Head of caudate nucleus (tissue), 42 donors: ENCODE measurements at regions of chr3 and their contacts with region 1.

Region 1: GRCh38 chr3:181176601-181177000 is 187.1 kb upstream of the DNAJC19 start:
- DNase-seq: peak; percentile 51 to 93 (median 80)

Region 2: DNA sequence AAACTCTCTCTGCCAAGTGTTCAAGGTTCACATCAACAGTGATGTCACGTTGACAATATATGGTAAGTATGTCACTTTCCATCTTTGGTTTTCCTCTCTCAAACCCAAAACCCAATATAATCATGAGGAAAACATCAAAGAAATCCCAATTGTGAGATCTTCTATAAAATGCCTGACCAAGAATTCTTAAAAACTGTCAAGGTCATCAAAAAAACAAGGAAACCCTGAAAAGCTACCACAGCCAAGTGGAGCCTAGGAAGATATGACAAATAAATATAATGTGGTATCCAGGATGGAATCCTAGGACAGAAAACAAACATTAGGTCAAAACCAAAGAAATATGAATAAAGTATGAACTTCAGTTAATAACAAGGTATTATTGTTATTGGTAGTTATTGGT is 412.1 kb before region 1 on chr3:
- intact Hi-C with region 1: no loop called
- DNase-seq: no peak

Region 3: GRCh38 chr3:180802837-180803236 is 373.8 kb before region 1 on chr3:
- intact Hi-C with region 1: loop called (anchors 5 kb)
- DNase-seq: peak in 7 of 42 donors; percentile 9 to 58 (median 20)

Region 4: GRCh38 chr3:180989291-180990163 is 187.1 kb before region 1 on chr3 and contains the start of gene DNAJC19:
- intact Hi-C with region 1: loop called (anchors 10 kb)
- DNase-seq: peak; percentile 88 to 98 (median 94)

Region 5: GRCh38 chr3:181075098-181075497 is 101.5 kb before region 1 on chr3:
- intact Hi-C with region 1: no loop called
- DNase-seq: no peak

Region 6: DNA sequence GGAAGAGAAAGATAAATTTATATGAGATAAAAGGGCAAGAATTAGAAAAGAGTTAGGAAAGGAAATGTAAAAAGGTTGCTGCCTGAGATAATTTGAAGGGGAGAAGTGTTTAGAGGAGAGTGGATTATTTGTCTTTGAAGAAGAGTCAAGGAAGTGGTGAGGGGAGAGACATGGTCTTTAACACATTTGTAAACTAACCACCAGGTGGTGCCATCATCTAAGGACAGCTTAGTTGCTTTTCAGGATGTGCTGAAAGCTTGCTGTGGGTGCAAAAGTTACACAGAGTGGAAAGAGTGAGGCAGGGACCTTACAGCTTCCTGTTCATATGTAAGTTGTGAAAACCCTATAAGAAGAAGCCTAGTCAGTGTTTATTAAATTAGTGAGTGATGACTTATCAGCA is 73.0 kb before region 1 on chr3:
- intact Hi-C with region 1: no loop called
- DNase-seq: no peak

Region 7: GRCh38 chr3:181442066-181442465 is 265.5 kb after region 1 on chr3:
- intact Hi-C with region 1: no loop called
- DNase-seq: no peak